Activated naive CD4-positive, alpha-beta T cell treated with anti-CD3 and anti-CD28 coated beads for 36 hours (primary cell): ENCODE measurements at regions of chr17 and their contacts with region 1.

Region 1: DNA sequence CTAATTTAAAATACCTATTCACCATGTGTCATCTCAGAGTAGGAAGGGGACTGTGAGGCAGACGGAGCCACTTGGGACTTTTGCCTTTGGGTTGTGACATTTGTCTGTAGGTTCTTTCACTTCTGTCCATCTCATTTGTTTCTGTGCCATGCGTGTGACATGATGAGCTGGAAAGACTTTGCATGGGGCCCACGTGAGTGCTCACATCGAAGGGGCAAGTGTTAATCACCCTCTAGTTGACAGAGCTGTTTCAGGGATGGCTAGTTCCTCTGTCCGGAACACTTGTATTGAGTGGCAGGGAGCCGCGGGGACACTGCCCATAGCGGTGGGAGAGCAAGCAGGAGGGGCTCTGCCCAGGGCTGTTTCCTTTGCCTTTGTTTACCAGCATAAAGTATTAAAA is 112.0 kb downstream of the RPTOR start:
- DNase-seq: no peak
- H3K4me3 Mint-ChIP-seq: no peak overlapping the region
- H3K27ac Mint-ChIP-seq: no peak overlapping the region
- H3K4me1 Mint-ChIP-seq: peaks cover 30% of the 10 kb centered on the region
- H3K27me3 Mint-ChIP-seq: no peaks in the 10 kb centered on the region

Region 2: GRCh38 chr17:80619535-80620312 is 36.9 kb before region 1 on chr17:
- CTCF ChIA-PET with region 1: no interaction called
- intact Hi-C with region 1: loop called (anchors 2 kb)
- DNase-seq: no peak
- H3K4me3 Mint-ChIP-seq: no peak overlapping the region
- H3K27ac Mint-ChIP-seq: no peak overlapping the region
- H3K4me1 Mint-ChIP-seq: peaks cover 52% of the 10 kb centered on the region
- H3K27me3 Mint-ChIP-seq: no peaks in the 10 kb centered on the region